HCT116 (cell line): ENCODE measurements at regions of chr3 and their contacts with region 1.

Region 1: GRCh38 chr3:124078953-124079911 is 87.3 kb upstream of the ROPN1 start:
- DNase-seq: peak; percentile 22
- ATAC-seq: peak; percentile 67
- H3K4me3 ChIP-seq: no peak overlapping the region
- H3K27ac ChIP-seq: no peak overlapping the region
- H3K4me1 ChIP-seq: no peaks in the 10 kb centered on the region
- H3K27me3 ChIP-seq: peaks cover 64% of the 10 kb centered on the region
- CTCF ChIP-seq: peak; percentile 71 to 78 (median 73)
- POLR2A ChIP-seq: no peak
- RAD21 ChIP-seq: peak; percentile 79

Region 2: DNA sequence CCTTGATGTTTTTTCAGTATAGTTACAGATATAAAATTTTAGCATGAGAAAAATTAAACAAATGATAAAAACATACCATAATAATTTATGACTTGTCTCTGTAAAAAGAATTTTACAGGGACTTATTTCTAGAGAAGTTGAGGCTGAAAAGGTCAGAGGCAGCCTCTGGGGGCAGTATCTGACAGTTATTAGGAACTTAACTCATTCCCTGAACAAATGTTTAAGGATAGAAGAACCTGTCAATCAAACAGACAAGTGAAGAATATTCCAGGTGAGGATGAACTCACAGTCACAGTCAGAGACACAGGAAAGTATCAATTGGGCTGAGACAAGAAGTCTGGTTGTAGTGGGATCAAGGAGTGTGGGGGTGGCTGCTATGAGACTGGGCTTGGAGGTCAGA is 202.4 kb before region 1 on chr3:
- CTCF ChIA-PET with region 1: no interaction called
- POLR2A ChIA-PET with region 1: no interaction called
- RAD21 ChIA-PET with region 1: no interaction called
- intact Hi-C with region 1: loop called (anchors 1 kb)
- DNase-seq: no peak
- ATAC-seq: peak; percentile 60
- H3K4me3 ChIP-seq: no peak overlapping the region
- H3K27ac ChIP-seq: no peak overlapping the region
- H3K4me1 ChIP-seq: no peaks in the 10 kb centered on the region
- H3K27me3 ChIP-seq: no peaks in the 10 kb centered on the region
- CTCF ChIP-seq: peak; percentile 25 to 53 (median 51); a peak in 5 of 6 replicates
- POLR2A ChIP-seq: no peak
- RAD21 ChIP-seq: peak; percentile 34; the same call in 1 of the 2 replicates

Region 3: DNA sequence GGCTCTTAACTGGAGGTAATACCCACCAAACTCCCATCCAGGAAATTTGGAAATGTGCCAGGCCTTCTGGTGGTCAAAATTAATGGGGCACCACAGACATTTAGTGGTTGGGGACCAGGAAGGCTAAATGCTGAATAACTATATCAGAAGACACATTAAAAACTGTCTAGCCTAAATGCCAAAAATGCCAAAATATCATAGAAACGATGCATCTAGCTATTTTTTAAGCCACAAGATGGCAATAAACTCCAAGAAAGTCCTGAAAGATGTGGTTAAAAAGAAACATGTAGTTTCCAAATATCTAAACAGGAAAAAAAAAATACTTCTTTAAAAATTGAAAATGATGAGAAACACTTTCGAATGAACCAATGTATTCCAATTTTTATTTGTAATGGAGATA is 138.1 kb before region 1 on chr3:
- CTCF ChIA-PET with region 1: no interaction called
- POLR2A ChIA-PET with region 1: no interaction called
- RAD21 ChIA-PET with region 1: no interaction called
- intact Hi-C with region 1: loop called (anchors 2 kb)
- DNase-seq: no peak
- ATAC-seq: no peak
- H3K4me3 ChIP-seq: no peak overlapping the region
- H3K27ac ChIP-seq: no peak overlapping the region
- H3K4me1 ChIP-seq: no peaks in the 10 kb centered on the region
- H3K27me3 ChIP-seq: no peaks in the 10 kb centered on the region
- CTCF ChIP-seq: no peak; a peak in 1 of 6 replicates
- POLR2A ChIP-seq: no peak
- RAD21 ChIP-seq: peak; percentile 21; the same call in 1 of the 2 replicates